ENCODE measurements at regions of chr10 and their contacts with region 1.

Region 1: GRCh38 chr10:91006001-91006751 is 85.3 kb upstream of the ANKRD1 start:
- DNase-seq: peak; percentile 76
- ATAC-seq: peak; percentile 80
- H3K4me3 Mint-ChIP-seq: no peak overlapping the region
- H3K27ac Mint-ChIP-seq: no peak overlapping the region
- H3K4me1 Mint-ChIP-seq: peaks cover 32% of the 10 kb centered on the region
- H3K27me3 Mint-ChIP-seq: peaks cover 3% of the 10 kb centered on the region

Region 2: DNA sequence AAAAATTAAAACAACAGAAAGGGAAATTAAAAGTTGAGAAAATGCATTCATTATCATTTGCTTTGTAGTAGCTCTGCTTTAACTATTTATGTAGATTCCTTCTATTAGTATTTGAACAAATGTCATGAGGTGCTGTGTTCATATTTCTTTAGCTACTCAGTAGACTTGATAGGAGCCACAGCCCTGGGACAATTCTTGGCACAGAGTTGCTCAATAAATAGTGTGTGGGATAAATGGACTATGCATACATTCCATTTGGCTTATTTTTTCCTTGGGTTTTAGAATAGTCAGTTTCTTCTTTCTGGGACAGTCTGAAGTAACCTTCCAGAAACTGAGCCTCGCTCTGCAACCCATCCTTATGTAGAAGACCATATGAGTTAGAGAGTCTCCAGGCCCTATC is 121.0 kb before region 1 on chr10:
- CTCF ChIA-PET with region 1: no interaction called
- POLR2A ChIA-PET with region 1: no interaction called
- intact Hi-C with region 1: loop called in 1 of 2 experiments (anchors 1 kb)
- DNase-seq: no peak
- ATAC-seq: no peak
- H3K4me3 Mint-ChIP-seq: no peak overlapping the region
- H3K27ac Mint-ChIP-seq: no peak overlapping the region
- H3K4me1 Mint-ChIP-seq: no peaks in the 10 kb centered on the region
- H3K27me3 Mint-ChIP-seq: no peaks in the 10 kb centered on the region

Region 3: GRCh38 chr10:91017198-91017597 is 11.0 kb after region 1 on chr10:
- CTCF ChIA-PET with region 1: interaction called, 29 read pairs
- POLR2A ChIA-PET with region 1: no interaction called
- intact Hi-C with region 1: no loop called
- DNase-seq: no peak
- ATAC-seq: peak; percentile 44
- H3K4me3 Mint-ChIP-seq: no peak overlapping the region
- H3K27ac Mint-ChIP-seq: no peak overlapping the region
- H3K4me1 Mint-ChIP-seq: peaks cover 5% of the 10 kb centered on the region
- H3K27me3 Mint-ChIP-seq: peaks cover 4% of the 10 kb centered on the region

Region 4: DNA sequence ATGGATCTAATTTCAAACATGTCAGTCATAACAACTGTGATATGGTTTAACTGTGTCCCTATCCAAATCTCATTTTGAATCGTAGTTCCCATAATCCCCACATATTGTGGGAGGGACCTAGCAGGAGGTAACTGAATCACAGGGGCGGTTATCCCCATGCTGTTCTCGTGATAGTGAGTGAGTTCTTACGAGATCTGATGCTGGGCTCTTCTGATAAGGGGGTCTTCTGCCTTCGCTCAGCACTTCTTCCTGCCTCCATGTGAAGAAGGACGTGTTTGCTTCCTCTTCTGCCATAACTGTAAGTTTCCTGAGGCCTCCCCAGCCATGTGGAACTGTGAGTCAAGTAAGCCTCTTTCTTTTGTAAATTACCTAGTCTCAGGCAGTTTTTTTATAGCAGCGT is 76.3 kb after region 1 on chr10:
- CTCF ChIA-PET with region 1: interaction called, 6 read pairs
- POLR2A ChIA-PET with region 1: no interaction called
- intact Hi-C with region 1: loop called in 1 of 2 experiments (anchors 5 kb)
- DNase-seq: no peak
- ATAC-seq: no peak
- H3K4me3 Mint-ChIP-seq: no peak overlapping the region
- H3K27ac Mint-ChIP-seq: no peak overlapping the region
- H3K4me1 Mint-ChIP-seq: no peaks in the 10 kb centered on the region
- H3K27me3 Mint-ChIP-seq: peaks cover 3% of the 10 kb centered on the region

Region 5: GRCh38 chr10:91163269-91163868 is 157.2 kb after region 1 on chr10:
- CTCF ChIA-PET with region 1: interaction called, 6 read pairs
- POLR2A ChIA-PET with region 1: no interaction called
- intact Hi-C with region 1: loop called (anchors 2 kb)
- DNase-seq: peak; percentile 83
- ATAC-seq: peak; percentile 62
- H3K4me3 Mint-ChIP-seq: peak overlapping the region; percentile 81
- H3K27ac Mint-ChIP-seq: peak overlapping the region; percentile 91
- H3K4me1 Mint-ChIP-seq: peaks cover 34% of the 10 kb centered on the region
- H3K27me3 Mint-ChIP-seq: no peaks in the 10 kb centered on the region

Region 6: DNA sequence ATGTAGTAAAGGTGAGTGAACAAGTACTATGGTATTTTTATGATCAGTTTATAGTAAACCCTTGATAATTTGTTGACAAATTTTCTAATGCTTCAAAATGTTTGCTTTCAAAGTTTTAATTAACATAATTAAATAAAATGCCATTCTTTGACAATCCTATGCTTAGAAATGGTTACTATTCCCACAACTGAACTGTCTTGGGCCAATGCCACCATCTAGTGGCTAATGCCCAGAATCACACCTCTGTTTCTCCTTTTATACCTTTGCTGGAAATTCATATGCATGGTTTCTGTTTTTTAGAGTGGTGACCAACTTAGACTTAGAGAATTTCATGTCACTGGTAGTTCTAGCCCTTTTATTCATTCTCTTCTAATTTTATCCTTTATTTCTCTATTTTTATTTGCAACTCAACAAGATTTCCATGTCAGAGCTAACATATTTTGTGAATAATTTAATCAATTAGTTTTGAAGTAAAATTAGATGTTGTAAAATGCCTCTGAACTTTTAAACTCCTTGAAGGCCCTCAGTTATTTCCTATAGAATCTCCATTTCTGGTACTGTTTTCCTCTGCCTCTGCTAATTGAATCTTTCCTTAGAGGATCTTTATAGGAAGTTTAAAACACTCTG is 245.4 kb after region 1 on chr10:
- CTCF ChIA-PET with region 1: interaction called, 111 read pairs
- POLR2A ChIA-PET with region 1: no interaction called
- intact Hi-C with region 1: loop called (anchors 1 kb)
- DNase-seq: peak; percentile 60
- ATAC-seq: no peak
- H3K4me3 Mint-ChIP-seq: no peak overlapping the region
- H3K27ac Mint-ChIP-seq: no peak overlapping the region
- H3K4me1 Mint-ChIP-seq: peaks cover 4% of the 10 kb centered on the region
- H3K27me3 Mint-ChIP-seq: no peaks in the 10 kb centered on the region

Region 7: GRCh38 chr10:91378061-91378460 is 371.9 kb after region 1 on chr10:
- CTCF ChIA-PET with region 1: no interaction called
- POLR2A ChIA-PET with region 1: no interaction called
- intact Hi-C with region 1: loop called in 1 of 2 experiments (anchors 10 kb)
- DNase-seq: peak; percentile 20
- ATAC-seq: peak; percentile 86
- H3K4me3 Mint-ChIP-seq: no peak overlapping the region
- H3K27ac Mint-ChIP-seq: no peak overlapping the region
- H3K4me1 Mint-ChIP-seq: peaks cover 24% of the 10 kb centered on the region
- H3K27me3 Mint-ChIP-seq: peaks cover 16% of the 10 kb centered on the region